Activated CD4-positive, alpha-beta T cell treated with anti-CD3 and anti-CD28 coated beads for 36 hours (primary cell): ENCODE measurements at regions of chr10 and their contacts with region 1.

Region 1: GRCh38 chr10:70575874-70576802 is 26.4 kb downstream of the PRF1 start:
- DNase-seq: peak; percentile 46
- ATAC-seq: peak; percentile 10
- H3K4me3 Mint-ChIP-seq: no peak overlapping the region
- H3K27ac Mint-ChIP-seq: peak overlapping the region; percentile 40
- H3K4me1 Mint-ChIP-seq: peaks cover 44% of the 10 kb centered on the region
- H3K27me3 Mint-ChIP-seq: no peaks in the 10 kb centered on the region

Region 2: GRCh38 chr10:70233109-70233938 is 342.8 kb before region 1 on chr10 and contains the start of gene PPA1:
- CTCF ChIA-PET with region 1: no interaction called
- POLR2A ChIA-PET with region 1: no interaction called
- intact Hi-C with region 1: loop called in 1 of 2 experiments (anchors 1 kb)
- DNase-seq: peak; percentile 100
- ATAC-seq: peak; percentile 91
- H3K4me3 Mint-ChIP-seq: peak within 1 kb of the TSS; percentile 83
- H3K27ac Mint-ChIP-seq: peak within 1 kb of the TSS; percentile 89
- H3K4me1 Mint-ChIP-seq: peaks cover 31% of the 10 kb centered on the region
- H3K27me3 Mint-ChIP-seq: no peaks in the 10 kb centered on the region
- total RNA-seq, gene PPA1: 286 to 328 TPM

Region 3: GRCh38 chr10:70254778-70255328 is 321.3 kb before region 1 on chr10:
- CTCF ChIA-PET with region 1: no interaction called
- POLR2A ChIA-PET with region 1: no interaction called
- intact Hi-C with region 1: no loop called
- DNase-seq: no peak
- ATAC-seq: no peak
- H3K4me3 Mint-ChIP-seq: no peak overlapping the region
- H3K27ac Mint-ChIP-seq: no peak overlapping the region
- H3K4me1 Mint-ChIP-seq: peaks cover 6% of the 10 kb centered on the region
- H3K27me3 Mint-ChIP-seq: peaks cover 42% of the 10 kb centered on the region

Region 4: GRCh38 chr10:70355051-70356021 is 220.8 kb before region 1 on chr10:
- CTCF ChIA-PET with region 1: no interaction called
- POLR2A ChIA-PET with region 1: no interaction called
- intact Hi-C with region 1: no loop called
- DNase-seq: peak; percentile 50
- ATAC-seq: peak; percentile 80
- H3K4me3 Mint-ChIP-seq: peak overlapping the region; percentile 7
- H3K27ac Mint-ChIP-seq: peak overlapping the region; percentile 69
- H3K4me1 Mint-ChIP-seq: peaks cover 24% of the 10 kb centered on the region
- H3K27me3 Mint-ChIP-seq: no peaks in the 10 kb centered on the region

Region 5: DNA sequence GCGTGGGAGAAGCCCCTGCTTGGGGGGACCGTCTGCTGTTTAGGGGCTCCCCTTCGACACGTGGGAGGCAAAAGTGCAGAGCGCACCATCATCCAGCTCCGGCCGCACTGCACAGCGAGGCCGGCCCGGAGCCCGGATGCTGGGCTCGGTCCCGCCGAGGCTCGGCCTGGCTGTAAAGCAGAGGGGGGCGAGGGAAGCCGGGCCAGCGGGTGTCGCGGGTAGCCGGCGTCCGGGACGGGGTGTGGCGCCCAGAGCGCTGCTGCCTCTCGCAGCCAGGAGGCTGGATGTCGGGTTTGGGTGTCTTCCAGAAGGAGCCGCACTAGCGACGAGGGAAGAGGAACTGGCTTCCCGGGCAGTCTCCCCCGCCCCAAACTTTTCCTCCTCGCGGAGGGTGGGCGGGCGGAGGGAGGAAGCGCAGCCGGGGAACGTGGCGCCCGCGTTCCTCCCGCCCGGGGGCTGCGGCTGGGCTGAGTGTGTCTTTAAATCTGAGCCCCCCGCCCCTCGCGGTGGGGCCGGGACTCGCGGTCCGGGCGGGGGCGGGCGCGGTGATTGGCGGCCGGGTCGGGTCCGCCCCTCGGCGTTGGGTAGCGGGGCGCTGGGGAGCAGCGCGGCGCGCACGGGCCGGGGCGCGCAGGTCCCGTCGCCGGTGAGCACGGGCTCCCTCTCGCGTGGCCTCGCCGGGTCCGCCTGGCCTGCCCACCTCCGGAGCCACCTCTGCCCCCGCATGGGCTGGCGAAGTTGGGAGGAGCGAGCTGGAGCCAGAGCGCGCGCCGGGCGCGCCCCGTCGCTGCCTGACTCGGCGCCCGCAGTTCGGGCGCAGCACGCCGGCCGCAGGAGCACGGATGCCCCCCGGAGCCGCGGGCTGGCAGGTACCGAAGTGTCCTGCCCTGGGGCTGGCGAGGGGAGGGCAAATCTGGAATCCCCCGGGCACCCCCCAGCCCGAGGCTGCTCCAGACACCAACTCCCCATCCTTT is 97.7 kb before region 1 on chr10 and contains the start of gene PALD1:
- CTCF ChIA-PET with region 1: no interaction called
- POLR2A ChIA-PET with region 1: no interaction called
- intact Hi-C with region 1: loop called in 1 of 2 experiments (anchors 1 kb)
- DNase-seq: peak; percentile 76
- ATAC-seq: peak; percentile 45
- H3K4me3 Mint-ChIP-seq: peak within 1 kb of the TSS; percentile 70
- H3K27ac Mint-ChIP-seq: peak within 1 kb of the TSS; percentile 67
- H3K4me1 Mint-ChIP-seq: peaks cover 41% of the 10 kb centered on the region
- H3K27me3 Mint-ChIP-seq: peaks cover 19% of the 10 kb centered on the region
- total RNA-seq, gene PALD1: 5.4 to 6.7 TPM

Region 6: DNA sequence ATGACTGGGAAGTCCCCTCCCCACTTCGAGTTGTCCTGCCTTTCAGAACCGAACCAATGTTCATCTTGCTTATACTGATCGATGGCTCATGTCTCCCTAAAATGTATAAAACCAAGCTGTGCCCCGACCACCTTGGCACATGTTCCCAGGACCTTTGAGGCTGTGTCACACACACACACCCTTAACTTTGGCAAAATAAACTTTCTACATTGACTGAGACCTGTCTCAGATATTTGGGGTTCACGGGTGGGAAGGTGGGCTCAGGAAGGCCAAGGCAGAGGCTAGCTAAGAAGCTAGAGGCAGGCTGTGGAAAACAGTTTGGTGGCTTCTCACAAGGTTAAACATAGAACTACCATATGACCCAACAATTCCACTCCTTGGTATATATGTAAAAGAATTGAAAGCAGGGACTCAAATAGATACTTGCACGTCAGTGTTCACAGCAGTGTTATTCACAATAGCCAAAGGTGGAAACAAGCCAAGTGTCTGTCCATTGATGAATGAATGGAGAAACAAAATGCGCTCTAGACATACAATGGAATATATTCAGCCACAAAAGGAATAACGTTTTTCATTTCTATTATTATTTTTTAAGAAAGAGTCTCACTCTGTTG is 11.0 kb after region 1 on chr10:
- CTCF ChIA-PET with region 1: interaction called, 4 read pairs
- POLR2A ChIA-PET with region 1: no interaction called
- intact Hi-C with region 1: loop called (anchors 1 kb)
- DNase-seq: peak; percentile 41
- ATAC-seq: peak; percentile 87
- H3K4me3 Mint-ChIP-seq: no peak overlapping the region
- H3K27ac Mint-ChIP-seq: peak overlapping the region; percentile 7
- H3K4me1 Mint-ChIP-seq: peaks cover 14% of the 10 kb centered on the region
- H3K27me3 Mint-ChIP-seq: peaks cover 10% of the 10 kb centered on the region

Region 7: DNA sequence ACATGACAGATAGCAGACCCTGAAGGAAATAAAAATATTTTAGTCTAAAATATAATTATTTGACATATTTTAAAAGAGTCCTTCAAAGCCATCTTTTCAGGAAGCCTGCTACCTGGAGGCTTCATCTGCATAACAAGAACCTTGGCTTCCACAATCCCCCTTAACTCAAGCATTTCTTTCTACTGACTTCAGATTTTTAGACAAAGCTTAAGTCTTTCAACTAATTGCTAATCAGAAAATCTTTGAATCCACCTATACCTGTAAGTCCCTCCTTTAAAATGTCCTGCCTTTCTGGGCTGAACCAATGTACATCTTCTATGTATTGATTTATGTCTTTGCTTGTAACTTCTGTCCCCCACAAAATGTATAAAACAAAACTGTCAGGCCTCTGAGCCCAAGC is 49.9 kb after region 1 on chr10:
- CTCF ChIA-PET with region 1: no interaction called
- POLR2A ChIA-PET with region 1: no interaction called
- intact Hi-C with region 1: no loop called
- DNase-seq: no peak
- ATAC-seq: no peak
- H3K4me3 Mint-ChIP-seq: no peak overlapping the region
- H3K27ac Mint-ChIP-seq: no peak overlapping the region
- H3K4me1 Mint-ChIP-seq: no peaks in the 10 kb centered on the region
- H3K27me3 Mint-ChIP-seq: no peaks in the 10 kb centered on the region

Region 8: DNA sequence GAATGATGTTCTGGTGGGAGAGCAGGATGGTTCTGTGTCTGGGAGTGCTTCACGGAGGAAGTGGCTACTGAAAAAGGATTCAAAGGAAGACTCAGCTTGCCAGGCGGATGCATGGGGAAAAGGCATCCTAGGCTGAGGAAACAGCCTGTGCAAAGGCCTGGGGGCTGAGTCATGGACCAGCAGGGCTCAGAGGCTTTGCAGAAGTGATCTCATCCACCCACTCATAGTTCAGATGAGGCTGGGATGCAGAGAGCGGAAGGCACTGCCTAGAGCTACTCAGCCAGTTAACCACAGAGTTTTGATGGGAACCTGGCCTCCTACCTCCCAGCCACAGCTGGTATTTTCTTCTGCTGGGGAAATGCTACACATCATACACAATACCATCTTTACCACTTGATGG is 80.4 kb after region 1 on chr10:
- CTCF ChIA-PET with region 1: interaction called, 4 read pairs
- POLR2A ChIA-PET with region 1: interaction called, 3 read pairs
- intact Hi-C with region 1: loop called (anchors 1 to 2 kb)
- DNase-seq: peak; percentile 87
- ATAC-seq: peak; percentile 100
- H3K4me3 Mint-ChIP-seq: no peak overlapping the region
- H3K27ac Mint-ChIP-seq: peak overlapping the region; percentile 16
- H3K4me1 Mint-ChIP-seq: peaks cover 14% of the 10 kb centered on the region
- H3K27me3 Mint-ChIP-seq: peaks cover 13% of the 10 kb centered on the region

Region 9: DNA sequence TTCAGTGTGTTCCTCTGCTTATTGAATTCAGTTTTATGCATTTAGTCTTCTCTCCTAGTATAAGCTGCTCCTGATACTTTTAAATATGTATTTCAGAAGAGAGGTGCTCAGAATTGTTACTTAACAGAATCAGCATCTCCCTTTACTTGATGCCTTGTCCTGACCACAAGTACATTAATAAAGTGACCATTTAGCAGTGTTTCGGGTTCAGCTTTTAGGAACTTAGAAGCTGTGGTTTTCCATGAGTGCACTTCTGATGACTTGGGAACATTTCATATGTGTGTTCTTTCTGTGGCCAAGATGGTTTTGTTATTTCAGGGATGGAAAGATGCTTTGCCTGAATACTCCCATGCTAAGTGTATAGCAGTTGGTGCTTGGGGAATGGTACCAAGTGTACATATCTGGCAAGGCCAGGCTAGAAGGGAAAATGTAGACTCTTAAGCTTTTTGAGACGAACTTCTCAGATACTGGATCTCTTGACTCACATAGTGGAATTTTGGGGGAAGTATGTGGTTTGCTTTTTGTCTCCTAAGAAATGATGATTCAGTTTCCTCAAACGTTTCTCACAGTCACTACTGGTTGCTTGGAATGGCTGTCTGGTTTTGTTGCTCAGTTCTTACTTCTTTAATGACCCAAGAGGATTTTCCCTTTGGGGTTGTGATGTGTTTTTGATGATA is 256.9 kb after region 1 on chr10:
- CTCF ChIA-PET with region 1: interaction called, 4 read pairs
- POLR2A ChIA-PET with region 1: no interaction called
- intact Hi-C with region 1: loop called in 1 of 2 experiments (anchors 2 kb)
- DNase-seq: no peak
- ATAC-seq: peak; percentile 74
- H3K4me3 Mint-ChIP-seq: peak overlapping the region; percentile 20
- H3K27ac Mint-ChIP-seq: peak overlapping the region; percentile 88
- H3K4me1 Mint-ChIP-seq: peaks cover 89% of the 10 kb centered on the region
- H3K27me3 Mint-ChIP-seq: no peaks in the 10 kb centered on the region